ENCODE measurements at regions of chr22 and their contacts with region 1.

Region 1: DNA sequence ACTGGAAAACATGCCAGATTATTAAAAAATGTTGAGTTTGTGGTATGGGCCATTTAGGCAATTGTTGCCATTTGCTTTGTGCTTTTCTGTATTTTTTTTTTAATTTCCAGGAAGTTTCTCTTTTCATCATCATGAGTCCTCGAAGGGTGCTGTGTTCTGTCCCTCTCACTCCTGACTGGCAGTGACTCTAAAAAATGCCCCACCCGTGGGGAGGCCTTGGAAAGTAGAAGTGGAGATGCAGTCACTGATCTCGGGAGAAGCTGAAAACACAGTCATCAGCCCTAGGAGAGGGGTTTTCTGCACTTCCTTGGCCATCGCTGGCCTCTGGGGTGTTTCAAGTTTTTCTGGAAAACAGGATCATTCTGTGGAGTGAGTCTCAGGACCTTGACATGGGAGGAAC is 98.5 kb upstream of the GRK3 start:
- DNase-seq: no peak
- ATAC-seq: no peak
- H3K4me3 ChIP-seq: no peak overlapping the region
- H3K27ac ChIP-seq: no peak overlapping the region
- H3K4me1 ChIP-seq: no peaks in the 10 kb centered on the region
- H3K27me3 ChIP-seq: no peaks in the 10 kb centered on the region
- CTCF ChIP-seq: no peak

Region 2: DNA sequence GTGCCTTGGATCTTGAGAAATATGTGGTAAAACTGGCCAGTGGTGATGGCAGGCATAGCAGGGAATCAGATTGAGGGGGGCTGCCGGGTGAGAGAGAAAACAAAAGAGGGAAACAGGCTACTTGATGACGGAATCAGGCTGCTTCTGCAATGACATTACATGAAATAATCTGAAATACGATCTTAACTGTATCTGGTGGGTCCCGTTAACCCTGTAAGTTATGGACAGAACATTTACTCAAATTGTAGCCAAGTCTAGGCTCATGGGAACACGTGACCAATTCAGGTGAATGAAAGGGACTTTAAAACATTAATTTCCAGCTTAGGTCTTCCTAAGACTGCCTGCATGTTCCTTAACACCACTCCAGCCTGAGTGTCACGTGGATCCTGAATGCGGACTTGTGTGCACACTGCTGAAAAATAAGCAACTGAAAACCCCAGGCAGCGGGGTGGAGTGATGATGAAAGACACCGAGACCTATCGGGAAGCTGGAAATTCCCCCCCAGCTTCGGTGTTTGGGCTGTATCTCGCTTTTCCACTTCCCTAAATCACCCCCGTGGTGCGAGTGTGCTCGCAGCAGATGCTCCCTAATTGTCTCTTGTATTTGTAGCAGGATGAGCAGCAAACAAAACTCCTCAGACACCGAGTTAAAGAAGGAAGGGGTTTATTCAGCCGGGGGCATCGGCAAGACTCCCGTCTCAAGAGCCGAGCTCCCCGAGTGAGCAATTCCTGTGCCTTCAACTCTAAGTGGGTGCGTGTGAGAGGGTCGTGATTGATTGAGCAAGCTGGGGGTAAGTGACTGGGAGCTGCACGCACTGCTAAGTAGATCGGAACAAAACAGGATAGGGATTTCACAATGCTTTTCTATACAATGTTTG is 46.5 kb before region 1 on chr22:
- intact Hi-C with region 1: no loop called
- DNase-seq: no peak
- ATAC-seq: peak; percentile 72
- H3K4me3 ChIP-seq: peak overlapping the region; percentile 15
- H3K27ac ChIP-seq: no peak overlapping the region
- H3K4me1 ChIP-seq: peaks cover 20% of the 10 kb centered on the region
- H3K27me3 ChIP-seq: peaks cover 43% of the 10 kb centered on the region
- CTCF ChIP-seq: no peak

Region 3: DNA sequence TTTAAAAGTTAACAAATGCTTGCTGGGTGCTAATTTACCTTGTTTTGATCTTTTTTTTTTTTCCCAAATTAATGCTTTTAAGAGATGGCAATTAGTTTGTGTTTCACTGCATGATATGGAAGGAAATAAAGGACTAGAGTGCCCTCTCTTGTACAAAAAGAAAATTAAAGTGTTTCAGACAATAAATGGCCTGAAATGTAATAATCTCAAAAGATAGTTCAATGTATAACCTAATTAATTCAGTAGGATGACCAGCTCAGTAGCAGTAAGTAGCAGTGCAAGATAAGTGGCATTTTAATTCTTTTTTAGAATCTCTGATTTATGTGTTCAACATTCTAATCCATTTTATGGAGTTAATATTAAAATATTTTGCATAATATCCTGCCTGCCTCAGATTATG is 236.1 kb after region 1 on chr22:
- intact Hi-C with region 1: loop called (anchors 5 kb)
- DNase-seq: no peak
- ATAC-seq: no peak
- H3K4me3 ChIP-seq: no peak overlapping the region
- H3K27ac ChIP-seq: no peak overlapping the region
- H3K4me1 ChIP-seq: no peaks in the 10 kb centered on the region
- H3K27me3 ChIP-seq: no peaks in the 10 kb centered on the region
- CTCF ChIP-seq: peak; percentile 48

Region 4: GRCh38 chr22:25777870-25778269 is 311.9 kb after region 1 on chr22:
- intact Hi-C with region 1: loop called (anchors 10 kb)
- DNase-seq: no peak
- ATAC-seq: peak; percentile 38
- H3K4me3 ChIP-seq: no peak overlapping the region
- H3K27ac ChIP-seq: no peak overlapping the region
- H3K4me1 ChIP-seq: no peaks in the 10 kb centered on the region
- H3K27me3 ChIP-seq: no peaks in the 10 kb centered on the region
- CTCF ChIP-seq: peak; percentile 22